ENCODE measurements at regions of chr9 and their contacts with region 1.

Region 1: GRCh38 chr9:82961504-82962125 is 101.3 kb downstream of the RASEF start:
- DNase-seq: peak; percentile 64 to 79
- H3K4me3 ChIP-seq: no peak overlapping the region
- H3K27ac ChIP-seq: no peak overlapping the region
- H3K4me1 ChIP-seq: no peaks in the 10 kb centered on the region
- H3K27me3 ChIP-seq: no peaks in the 10 kb centered on the region
- CTCF ChIP-seq: peak; percentile 92

Region 2: DNA sequence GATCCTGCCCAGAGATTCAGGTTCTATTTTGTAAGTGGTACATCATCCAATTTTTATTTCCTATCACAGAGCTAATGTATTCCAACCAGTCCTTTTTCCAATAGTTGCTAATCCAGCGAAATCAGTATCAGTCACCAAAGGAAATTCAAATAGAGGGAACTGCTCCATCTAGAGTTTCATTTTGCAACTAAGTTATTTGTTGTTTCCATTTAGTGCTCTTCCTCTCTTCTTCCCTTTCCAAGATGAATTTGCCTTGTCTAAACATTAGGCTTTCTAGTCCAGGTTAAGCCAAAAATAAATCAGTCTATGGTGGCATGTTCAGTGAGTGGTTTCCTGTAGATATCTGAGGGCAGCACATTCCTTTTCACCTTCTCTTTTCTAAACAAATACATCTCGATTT is 1113.1 kb before region 1 on chr9:
- CTCF ChIA-PET with region 1: no interaction called
- POLR2A ChIA-PET with region 1: no interaction called
- intact Hi-C with region 1: loop called (anchors 10 kb)
- DNase-seq: no peak
- H3K4me3 ChIP-seq: no peak overlapping the region
- H3K27ac ChIP-seq: no peak overlapping the region
- H3K4me1 ChIP-seq: peaks cover 20% of the 10 kb centered on the region
- H3K27me3 ChIP-seq: no peaks in the 10 kb centered on the region
- CTCF ChIP-seq: peak; percentile 54; the same call in 1 of the 2 replicates

Region 3: DNA sequence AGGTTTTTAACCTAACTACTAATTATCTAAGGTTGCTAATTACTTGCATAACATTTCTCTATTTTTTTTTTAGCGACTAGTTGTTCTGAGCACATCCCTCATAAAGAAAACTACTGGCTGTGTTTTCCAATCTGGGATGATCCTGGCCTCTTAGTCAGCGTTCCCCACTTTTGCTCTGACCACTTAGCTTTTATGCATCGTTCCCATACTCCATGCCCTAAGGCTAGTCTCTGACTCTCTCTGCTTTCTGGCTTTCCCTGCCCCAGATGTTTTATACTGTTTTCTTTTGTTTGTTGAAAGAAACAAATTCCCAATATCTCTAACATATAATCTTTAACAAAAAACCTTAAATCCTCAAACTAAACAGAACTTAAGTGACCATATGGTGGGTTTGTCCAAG is 755.1 kb before region 1 on chr9:
- CTCF ChIA-PET with region 1: no interaction called
- POLR2A ChIA-PET with region 1: interaction called, 12 read pairs
- intact Hi-C with region 1: no loop called
- DNase-seq: no peak
- H3K4me3 ChIP-seq: no peak overlapping the region
- H3K27ac ChIP-seq: no peak overlapping the region
- H3K4me1 ChIP-seq: peaks cover 5% of the 10 kb centered on the region; the same call in 1 of the 2 replicates
- H3K27me3 ChIP-seq: no peaks in the 10 kb centered on the region
- CTCF ChIP-seq: no peak

Region 4: GRCh38 chr9:82532504-82533180 is 429.0 kb before region 1 on chr9:
- CTCF ChIA-PET with region 1: interaction called, 3 read pairs
- POLR2A ChIA-PET with region 1: no interaction called
- intact Hi-C with region 1: loop called (anchors 1 kb)
- DNase-seq: no peak
- H3K4me3 ChIP-seq: no peak overlapping the region
- H3K27ac ChIP-seq: no peak overlapping the region
- H3K4me1 ChIP-seq: no peaks in the 10 kb centered on the region
- H3K27me3 ChIP-seq: no peaks in the 10 kb centered on the region
- CTCF ChIP-seq: peak; percentile 40; the same call in 1 of the 2 replicates

Region 5: DNA sequence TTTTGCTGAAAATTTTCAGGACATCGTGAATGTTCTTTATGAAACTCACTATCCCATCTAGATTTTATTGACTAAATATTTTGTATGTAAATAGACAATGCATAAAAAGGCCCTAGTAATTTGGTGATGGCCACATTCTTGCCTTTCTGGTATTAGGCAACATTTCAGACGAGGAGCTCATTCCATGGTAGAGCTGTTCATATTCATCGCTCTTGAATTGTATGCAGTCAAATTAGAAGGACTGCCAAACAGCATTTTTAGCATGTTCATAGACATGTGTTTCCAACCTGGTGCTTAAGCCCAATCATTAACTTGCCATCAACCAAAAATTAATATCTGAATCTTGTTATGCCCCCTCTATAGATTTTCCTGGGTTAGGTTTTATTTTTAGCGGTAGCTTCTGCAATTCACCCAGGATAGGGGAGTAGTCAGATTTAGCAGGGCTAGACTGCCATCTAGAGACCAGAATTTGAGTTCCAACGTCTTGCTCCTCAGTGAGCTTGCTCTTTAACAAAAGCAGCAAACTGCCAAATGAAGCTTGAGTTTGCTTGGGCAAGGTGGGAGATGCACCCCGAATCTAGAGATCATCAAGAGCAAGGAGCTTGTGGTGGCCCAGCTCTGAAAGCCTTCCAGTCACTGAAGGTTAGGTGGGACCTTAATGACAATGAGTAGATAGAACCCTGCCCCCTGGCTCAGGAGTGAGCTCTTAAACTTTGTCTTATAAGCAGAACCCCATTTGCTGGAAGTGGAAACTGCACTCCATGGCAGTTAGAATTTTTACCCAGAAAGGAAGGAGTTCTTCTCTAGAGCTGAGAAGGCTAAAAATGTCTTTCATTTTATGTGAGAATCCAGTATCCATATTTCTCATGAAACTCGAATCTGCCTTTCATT is 354.9 kb before region 1 on chr9:
- CTCF ChIA-PET with region 1: interaction called, 3 read pairs
- POLR2A ChIA-PET with region 1: no interaction called
- intact Hi-C with region 1: loop called (anchors 5 kb)
- DNase-seq: peak in 1 of 2 experiments; percentile 37
- H3K4me3 ChIP-seq: no peak overlapping the region
- H3K27ac ChIP-seq: no peak overlapping the region
- H3K4me1 ChIP-seq: no peaks in the 10 kb centered on the region
- H3K27me3 ChIP-seq: no peaks in the 10 kb centered on the region
- CTCF ChIP-seq: peak; percentile 63

Region 6: GRCh38 chr9:83062656-83063527 is 101.3 kb after region 1 on chr9 and contains the start of gene RASEF:
- CTCF ChIA-PET with region 1: no interaction called
- POLR2A ChIA-PET with region 1: no interaction called
- intact Hi-C with region 1: loop called (anchors 5 kb)
- DNase-seq: peak; percentile 84 to 95
- H3K4me3 ChIP-seq: peak within 1 kb of the TSS; percentile 67
- H3K27ac ChIP-seq: peak within 1 kb of the TSS; percentile 92
- H3K4me1 ChIP-seq: peaks cover 39% of the 10 kb centered on the region
- H3K27me3 ChIP-seq: no peaks in the 10 kb centered on the region
- CTCF ChIP-seq: no peak; the same call in 1 of the 2 replicates
- total RNA-seq, gene RASEF: 10.8 and 12.8 TPM in 2 replicates

Measured in PC-9 (cell line).